Activated T-helper 2 cell treated with anti-CD3 and anti-CD28 coated beads, Interferon-gamma antibody, Interleukin-2, Interleukin-4, amounts not matched to agents 10 μg/mL and 5 μg/mL and 100 μg/mL, durations not matched to agents 14 hours and 24 hours and 36 hours (primary cell): ENCODE measurements at regions of chr5 and their contacts with region 1.

Region 1: GRCh38 chr5:6827526-6828219 is 114.4 kb downstream of the TENT4A start:
- DNase-seq: peak; percentile 51
- H3K4me3 Mint-ChIP-seq: peak overlapping the region; percentile 74
- H3K27ac Mint-ChIP-seq: peak overlapping the region; percentile 93
- H3K4me1 Mint-ChIP-seq: peaks cover 61% of the 10 kb centered on the region
- H3K27me3 Mint-ChIP-seq: peaks cover 10% of the 10 kb centered on the region

Region 2: DNA sequence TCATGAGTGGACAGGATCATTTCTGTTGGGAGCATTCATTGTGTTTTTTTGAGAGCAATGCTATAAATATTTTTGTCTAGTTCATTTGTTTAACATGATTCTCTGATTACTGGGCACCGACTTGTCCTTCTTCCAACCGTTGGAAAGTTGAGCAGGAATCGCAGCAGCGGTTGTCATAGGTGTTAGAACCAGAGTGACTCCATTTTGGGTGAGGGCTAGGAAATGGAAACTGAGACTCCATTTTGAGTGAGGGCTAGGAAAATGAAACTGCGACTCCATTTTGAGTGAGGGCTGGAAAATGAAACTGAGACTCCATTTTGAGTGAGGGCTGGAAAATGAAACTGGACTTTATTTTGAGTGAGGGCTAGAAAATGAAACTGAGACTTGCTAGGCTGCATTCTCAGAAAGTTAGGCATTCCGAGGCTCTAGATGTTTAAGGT is 1304.6 kb before region 1 on chr5:
- intact Hi-C with region 1: loop called (anchors 5 kb)
- DNase-seq: peak; percentile 41
- H3K4me3 Mint-ChIP-seq: no peak overlapping the region
- H3K27ac Mint-ChIP-seq: peak overlapping the region; percentile 53
- H3K4me1 Mint-ChIP-seq: peaks cover 26% of the 10 kb centered on the region
- H3K27me3 Mint-ChIP-seq: no peaks in the 10 kb centered on the region

Region 3: DNA sequence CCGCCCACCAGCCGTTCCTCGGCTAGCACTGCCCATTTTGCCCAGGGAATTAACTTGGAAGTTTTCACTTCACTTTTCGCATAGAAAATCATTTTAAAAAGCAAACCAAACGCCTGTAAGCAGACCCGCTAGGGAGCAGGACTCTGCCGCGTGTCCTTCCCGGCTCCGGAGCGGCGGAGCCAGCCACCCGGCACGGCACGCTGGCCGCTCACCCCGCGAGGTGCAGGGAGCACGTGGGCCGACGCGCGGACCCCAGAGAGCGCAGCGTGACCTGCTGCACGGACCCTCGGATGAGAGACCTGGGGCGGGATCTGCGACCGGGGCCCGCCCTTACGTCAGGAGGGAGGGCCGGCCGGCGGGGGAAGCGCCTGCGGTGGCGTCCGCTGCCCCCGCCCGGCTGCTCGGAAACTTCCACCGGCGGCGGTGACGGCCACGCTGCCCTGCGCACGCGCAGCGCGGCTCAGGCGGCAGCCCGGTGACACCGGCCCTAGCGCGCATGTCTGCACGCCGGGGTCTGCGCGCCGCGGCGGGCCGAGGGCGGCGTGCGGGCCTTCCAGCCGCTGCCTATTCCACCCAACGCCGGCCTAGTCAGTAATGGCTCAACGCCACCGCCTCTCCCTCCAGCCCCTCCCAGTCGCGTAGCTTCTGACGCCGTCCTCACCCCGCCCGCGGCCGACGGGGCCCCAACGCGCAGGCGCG is 114.9 kb before region 1 on chr5:
- intact Hi-C with region 1: loop called (anchors 2 kb)
- DNase-seq: peak; percentile 97
- H3K4me3 Mint-ChIP-seq: peak overlapping the region; percentile 86
- H3K27ac Mint-ChIP-seq: peak overlapping the region; percentile 93
- H3K4me1 Mint-ChIP-seq: peaks cover 32% of the 10 kb centered on the region
- H3K27me3 Mint-ChIP-seq: no peaks in the 10 kb centered on the region

Region 4: GRCh38 chr5:6868171-6868570 is 40.5 kb after region 1 on chr5:
- intact Hi-C with region 1: no loop called
- DNase-seq: no peak
- H3K4me3 Mint-ChIP-seq: no peak overlapping the region
- H3K27ac Mint-ChIP-seq: no peak overlapping the region
- H3K4me1 Mint-ChIP-seq: no peaks in the 10 kb centered on the region
- H3K27me3 Mint-ChIP-seq: no peaks in the 10 kb centered on the region

Region 5: GRCh38 chr5:6905883-6906282 is 78.2 kb after region 1 on chr5:
- intact Hi-C with region 1: loop called (anchors 5 kb)
- DNase-seq: no peak
- H3K4me3 Mint-ChIP-seq: no peak overlapping the region
- H3K27ac Mint-ChIP-seq: no peak overlapping the region
- H3K4me1 Mint-ChIP-seq: peaks cover 3% of the 10 kb centered on the region
- H3K27me3 Mint-ChIP-seq: no peaks in the 10 kb centered on the region

Region 6: GRCh38 chr5:7868773-7869473 is 1041.2 kb after region 1 on chr5 and contains the starts of genes FASTKD3 and MTRR:
- intact Hi-C with region 1: loop called (anchors 5 kb)
- DNase-seq: peak; percentile 87
- H3K4me3 Mint-ChIP-seq: peak within 1 kb of the TSS; percentile 99
- H3K27ac Mint-ChIP-seq: peak within 1 kb of the TSS; percentile 83
- H3K4me1 Mint-ChIP-seq: peaks cover 62% of the 10 kb centered on the region
- H3K27me3 Mint-ChIP-seq: no peaks in the 10 kb centered on the region
- total RNA-seq, gene FASTKD3: 11.6 and 12.7 TPM in 2 replicates
- total RNA-seq, gene MTRR: 61.9 and 71.4 TPM in 2 replicates